ENCODE measurements at regions of chr12 and their contacts with region 1.

Region 1: DNA sequence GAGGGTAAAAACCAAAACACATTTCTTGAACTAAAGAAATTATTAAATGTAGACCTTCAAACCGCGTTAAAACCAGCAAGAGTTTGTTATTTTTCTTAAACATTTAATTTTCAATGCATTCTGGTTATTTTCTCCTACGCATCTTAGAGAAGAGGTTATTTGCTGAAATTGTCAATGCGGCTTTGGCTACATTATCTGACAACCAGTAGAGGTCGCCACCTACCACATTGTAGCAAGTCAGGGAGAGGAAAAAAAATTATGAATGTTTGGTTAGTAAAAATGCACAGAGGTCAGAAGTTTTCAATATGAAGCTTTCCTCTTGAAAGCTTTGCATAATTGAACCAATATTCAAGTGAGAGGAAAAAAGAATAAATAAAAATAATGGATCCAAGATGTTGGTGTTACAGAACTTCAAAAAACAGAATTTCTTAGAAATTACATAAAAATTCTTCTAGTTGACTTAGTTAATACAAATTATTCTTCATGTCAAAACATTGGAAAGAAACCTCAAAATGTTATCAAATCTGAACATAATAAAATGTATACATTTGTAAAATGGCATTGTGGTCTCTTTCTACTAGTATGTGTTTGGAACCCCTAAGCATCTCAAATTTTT is 159.4 kb upstream of the TMTC2 start:
- DNase-seq: peak in 4 of 5 donors; percentile 18 to 26 (median 22)
- H3K4me3 ChIP-seq: no peak overlapping the region
- H3K4me3 Mint-ChIP-seq: peak overlapping the region in 1 of 8 donors; percentile 33
- H3K27ac ChIP-seq: no peak overlapping the region
- H3K27ac Mint-ChIP-seq: no peak overlapping the region
- H3K4me1 ChIP-seq: no peaks in the 10 kb centered on the region
- H3K4me1 Mint-ChIP-seq: peaks cover 0 to 1% (median 0%) of the 10 kb centered on the region in 4 donors
- H3K27me3 ChIP-seq: no peaks in the 10 kb centered on the region
- H3K27me3 Mint-ChIP-seq: peaks cover 2% of the 10 kb centered on the region in 2 donors

Region 2: DNA sequence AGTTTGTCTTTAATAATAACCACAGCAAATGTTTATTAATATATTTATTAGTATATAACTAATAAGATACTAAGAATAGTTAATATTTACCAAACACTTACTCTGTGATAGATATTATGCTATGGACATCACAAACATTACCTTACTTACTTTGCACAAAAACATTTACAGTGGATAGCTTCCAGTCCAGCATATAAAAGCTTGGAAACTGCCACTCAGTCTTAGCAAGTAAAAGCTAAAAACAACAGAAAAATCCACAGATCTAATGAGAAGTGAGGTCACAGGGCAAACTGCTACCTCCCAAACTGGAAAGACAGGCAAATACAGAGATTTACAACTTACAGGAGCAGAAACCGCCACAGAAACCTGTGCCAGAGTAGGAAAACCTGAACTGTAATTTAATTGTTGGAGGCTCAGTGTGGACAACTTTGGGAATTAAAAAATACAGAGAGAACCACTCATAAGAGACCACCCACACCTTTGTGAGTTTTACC is 69.1 kb before region 1 on chr12:
- CTCF ChIA-PET with region 1: no interaction called
- POLR2A ChIA-PET with region 1: no interaction called
- intact Hi-C with region 1: no loop called
- DNase-seq: no peak
- H3K4me3 ChIP-seq: no peak overlapping the region
- H3K4me3 Mint-ChIP-seq: no peak overlapping the region
- H3K27ac ChIP-seq: no peak overlapping the region
- H3K27ac Mint-ChIP-seq: no peak overlapping the region
- H3K4me1 ChIP-seq: no peaks in the 10 kb centered on the region
- H3K4me1 Mint-ChIP-seq: no peaks in the 10 kb centered on the region
- H3K27me3 ChIP-seq: no peaks in the 10 kb centered on the region
- H3K27me3 Mint-ChIP-seq: no peaks in the 10 kb centered on the region

Region 3: GRCh38 chr12:82608706-82609105 is 81.4 kb after region 1 on chr12:
- CTCF ChIA-PET with region 1: no interaction called
- POLR2A ChIA-PET with region 1: no interaction called
- intact Hi-C with region 1: no loop called
- DNase-seq: no peak
- H3K4me3 ChIP-seq: no peak overlapping the region
- H3K4me3 Mint-ChIP-seq: no peak overlapping the region
- H3K27ac ChIP-seq: no peak overlapping the region
- H3K27ac Mint-ChIP-seq: no peak overlapping the region
- H3K4me1 ChIP-seq: no peaks in the 10 kb centered on the region
- H3K4me1 Mint-ChIP-seq: no peaks in the 10 kb centered on the region
- H3K27me3 ChIP-seq: no peaks in the 10 kb centered on the region
- H3K27me3 Mint-ChIP-seq: peaks cover 0 to 1% of the 10 kb centered on the region in 2 donors

Region 4: DNA sequence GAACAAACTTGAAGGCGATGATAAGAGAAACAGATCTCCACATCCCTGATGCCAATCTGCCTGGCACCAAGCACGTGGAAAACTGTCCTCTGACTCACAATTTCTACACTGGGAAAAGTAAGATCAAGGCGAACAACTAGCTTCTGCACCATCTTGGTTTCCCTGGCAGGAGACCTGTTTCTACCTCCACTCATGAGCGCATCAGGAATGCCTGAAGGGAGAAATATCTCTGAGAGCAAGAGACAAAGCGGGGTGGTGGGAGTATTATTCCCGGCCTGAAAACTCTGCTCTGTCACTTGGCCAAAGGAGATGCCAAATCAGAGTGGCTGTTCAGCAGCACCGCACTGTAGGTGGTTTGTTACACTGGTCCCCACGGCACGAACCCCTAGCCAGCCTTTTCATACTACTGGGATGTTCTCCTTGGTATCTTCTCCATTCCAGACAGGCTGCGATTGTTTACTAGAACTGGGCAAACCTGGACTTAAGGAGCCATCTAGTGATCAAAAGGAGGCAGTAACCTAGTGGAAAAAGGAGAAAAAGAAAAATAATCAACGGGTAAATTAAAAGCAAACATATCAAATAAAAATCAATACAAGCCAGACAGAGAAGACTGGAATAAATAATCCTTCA is 100.4 kb after region 1 on chr12:
- CTCF ChIA-PET with region 1: no interaction called
- POLR2A ChIA-PET with region 1: no interaction called
- intact Hi-C with region 1: no loop called
- DNase-seq: no peak
- H3K4me3 ChIP-seq: no peak overlapping the region
- H3K4me3 Mint-ChIP-seq: no peak overlapping the region
- H3K27ac ChIP-seq: no peak overlapping the region
- H3K27ac Mint-ChIP-seq: peak overlapping the region in 1 of 7 donors; percentile 33
- H3K4me1 ChIP-seq: no peaks in the 10 kb centered on the region
- H3K4me1 Mint-ChIP-seq: no peaks in the 10 kb centered on the region
- H3K27me3 ChIP-seq: no peaks in the 10 kb centered on the region
- H3K27me3 Mint-ChIP-seq: peaks cover 0 to 2% of the 10 kb centered on the region in 2 donors

Region 5: DNA sequence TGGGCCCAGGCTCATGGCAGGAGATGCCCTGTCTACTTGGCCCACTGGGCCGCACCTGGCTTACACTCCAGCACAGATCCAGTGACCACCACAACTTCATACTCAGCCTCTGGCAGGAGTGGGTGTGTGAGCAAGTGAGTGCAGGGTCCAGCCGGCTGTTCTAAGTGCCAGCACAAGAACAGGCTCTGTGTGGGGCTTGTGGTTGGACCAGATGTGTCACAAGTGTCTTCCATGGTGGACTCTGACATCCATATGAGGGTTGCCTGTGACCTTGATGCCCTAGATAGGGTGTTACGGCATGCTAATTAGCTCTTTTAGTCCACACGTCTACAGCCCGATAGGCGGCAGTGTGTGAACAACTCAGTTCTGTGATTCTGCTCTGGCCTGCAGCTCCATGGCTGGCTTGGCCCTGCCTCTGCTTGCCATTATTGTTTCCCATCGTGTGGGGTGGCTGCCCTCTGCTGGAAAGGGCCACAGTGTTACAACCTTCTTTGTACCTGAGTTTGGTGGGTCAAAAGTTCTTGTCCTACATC is 1296.2 kb after region 1 on chr12:
- CTCF ChIA-PET with region 1: no interaction called
- POLR2A ChIA-PET with region 1: no interaction called
- intact Hi-C with region 1: loop called (anchors 2 kb)
- DNase-seq: peak in 4 of 5 donors; percentile 2 to 21 (median 10)
- H3K4me3 ChIP-seq: no peak overlapping the region
- H3K4me3 Mint-ChIP-seq: no peak overlapping the region
- H3K27ac ChIP-seq: no peak overlapping the region
- H3K27ac Mint-ChIP-seq: no peak overlapping the region
- H3K4me1 ChIP-seq: no peaks in the 10 kb centered on the region
- H3K4me1 Mint-ChIP-seq: no peaks in the 10 kb centered on the region
- H3K27me3 ChIP-seq: no peaks in the 10 kb centered on the region
- H3K27me3 Mint-ChIP-seq: no peaks in the 10 kb centered on the region

Measured in CD4-positive, alpha-beta memory T cell (primary cell).